ENCODE measurements at regions of chr12 and their contacts with region 1.

Region 1: GRCh38 chr12:93502802-93503623 is 35.7 kb downstream of the MRPL42 start:
- DNase-seq: peak in 36 of 42 donors; percentile 16 to 85 (median 62)

Region 2: GRCh38 chr12:93427779-93428563 is 75.0 kb before region 1 on chr12:
- intact Hi-C with region 1: no loop called
- DNase-seq: no peak

Region 3: DNA sequence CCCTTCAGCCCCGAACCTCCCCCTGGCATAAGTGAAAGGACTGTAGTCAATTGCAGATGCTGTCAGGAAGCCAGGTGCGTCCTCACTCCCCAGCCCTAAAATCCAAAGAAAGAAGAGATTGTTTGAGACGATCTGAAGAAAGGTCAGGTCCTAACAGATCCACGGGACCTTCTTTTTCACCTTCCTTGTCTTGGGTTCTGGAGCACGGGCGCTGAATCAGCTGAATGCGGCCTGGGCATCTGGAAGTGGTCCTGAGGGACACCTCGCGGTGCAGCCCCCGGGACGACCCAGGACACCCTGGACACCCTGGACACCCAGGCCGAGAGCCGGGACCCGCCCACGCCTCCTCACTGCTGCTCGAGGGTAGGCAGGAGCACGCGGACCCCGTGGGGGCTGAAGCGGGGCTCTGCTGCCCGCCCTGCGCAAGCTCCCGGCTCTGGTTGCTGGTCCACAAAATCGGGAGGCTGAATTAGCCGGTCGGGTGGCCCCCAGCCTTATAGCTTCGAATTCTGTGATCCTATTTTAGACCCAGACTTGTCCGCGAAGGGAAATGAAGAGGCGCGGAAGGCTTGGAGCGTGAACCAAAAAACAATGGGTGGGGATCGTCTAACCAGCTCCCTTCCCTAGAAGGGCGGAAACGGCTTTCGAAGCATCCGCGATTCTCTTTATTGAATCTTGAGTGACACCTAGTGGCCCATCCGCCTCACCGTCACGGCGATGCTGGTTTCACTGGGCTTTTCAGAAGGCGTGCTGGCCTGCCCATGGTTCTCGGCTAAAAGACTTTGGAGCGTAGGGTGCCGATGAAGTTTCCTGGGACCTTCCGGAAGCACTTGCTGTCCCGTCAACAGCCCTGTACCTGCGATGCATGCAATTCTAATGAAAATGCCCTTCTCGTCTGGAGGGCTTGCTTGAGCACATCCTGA is 599.0 kb after region 1 on chr12:
- intact Hi-C with region 1: loop called (anchors 5 kb)
- DNase-seq: peak; percentile 71 to 93 (median 85)